MCF 10A (cell line): ENCODE measurements at regions of chr22 and their contacts with region 1.

Region 1: GRCh38 chr22:40950962-40951794 is at the start of gene RBX1:
- DNase-seq: peak; percentile 98
- H3K4me3 Mint-ChIP-seq: peak within 1 kb of the TSS; percentile 98
- H3K27ac Mint-ChIP-seq: peak within 1 kb of the TSS; percentile 99
- H3K4me1 Mint-ChIP-seq: peaks cover 8% of the 10 kb centered on the region
- H3K27me3 Mint-ChIP-seq: no peaks in the 10 kb centered on the region
- CTCF ChIP-seq: no peak
- total RNA-seq, gene RBX1: 46.7 and 71.3 TPM in 2 replicates

Region 2: DNA sequence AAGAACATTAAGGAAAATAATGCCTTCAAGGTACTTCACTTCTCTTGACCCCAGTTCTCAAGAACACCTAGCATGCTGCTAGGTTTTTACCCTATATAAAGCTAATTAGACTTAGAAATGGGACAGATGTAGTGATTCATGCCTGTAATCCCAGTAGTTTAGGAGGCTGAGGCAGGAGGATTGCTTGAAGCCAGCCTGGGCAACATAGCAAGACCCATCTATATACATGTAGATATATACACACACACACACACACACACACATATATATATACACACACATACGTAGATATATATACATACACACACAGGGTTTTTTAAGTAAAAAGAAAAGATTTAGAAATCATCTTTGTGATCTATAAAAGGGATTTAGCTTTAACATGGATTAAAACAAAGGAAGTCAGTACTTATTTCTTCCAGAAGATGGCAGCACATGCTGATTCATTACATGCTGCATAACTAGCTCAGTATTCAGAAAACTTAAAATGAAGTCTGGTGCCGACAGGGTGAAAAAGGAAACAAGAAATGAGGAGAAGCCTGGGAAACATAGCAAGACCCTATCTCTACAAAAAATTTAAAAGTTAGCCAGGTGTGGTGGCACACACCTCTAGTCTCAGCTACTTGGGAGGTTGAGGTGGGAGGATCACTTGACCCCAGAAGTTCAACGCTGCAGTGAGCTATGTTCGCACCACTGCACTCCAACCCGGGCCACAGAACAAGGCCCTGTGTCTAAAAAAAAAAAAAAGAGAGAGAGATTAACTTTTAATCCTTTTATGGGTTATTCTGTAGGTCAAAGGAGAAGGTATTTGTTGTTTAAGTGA is 28.5 kb before region 1 on chr22:
- CTCF ChIA-PET with region 1: interaction called, 10 read pairs
- POLR2A ChIA-PET with region 1: interaction called, 14 read pairs
- intact Hi-C with region 1: no loop called
- DNase-seq: peak; percentile 66
- H3K4me3 Mint-ChIP-seq: no peak overlapping the region
- H3K27ac Mint-ChIP-seq: no peak overlapping the region
- H3K4me1 Mint-ChIP-seq: peaks cover 5% of the 10 kb centered on the region
- H3K27me3 Mint-ChIP-seq: no peaks in the 10 kb centered on the region
- CTCF ChIP-seq: peak; percentile 64

Region 3: GRCh38 chr22:40965936-40966725 is 15.0 kb after region 1 on chr22:
- CTCF ChIA-PET with region 1: no interaction called
- POLR2A ChIA-PET with region 1: interaction called, 21 read pairs
- intact Hi-C with region 1: no loop called
- DNase-seq: no peak
- H3K4me3 Mint-ChIP-seq: no peak overlapping the region
- H3K27ac Mint-ChIP-seq: no peak overlapping the region
- H3K4me1 Mint-ChIP-seq: no peaks in the 10 kb centered on the region
- H3K27me3 Mint-ChIP-seq: no peaks in the 10 kb centered on the region
- CTCF ChIP-seq: no peak

Region 4: GRCh38 chr22:41022470-41023298 is 71.5 kb after region 1 on chr22:
- CTCF ChIA-PET with region 1: no interaction called
- POLR2A ChIA-PET with region 1: interaction called, 102 read pairs
- intact Hi-C with region 1: loop called (anchors 1 kb)
- DNase-seq: peak; percentile 86
- H3K4me3 Mint-ChIP-seq: peak overlapping the region; percentile 88
- H3K27ac Mint-ChIP-seq: peak overlapping the region; percentile 97
- H3K4me1 Mint-ChIP-seq: peaks cover 6% of the 10 kb centered on the region
- H3K27me3 Mint-ChIP-seq: no peaks in the 10 kb centered on the region
- CTCF ChIP-seq: no peak

Region 5: DNA sequence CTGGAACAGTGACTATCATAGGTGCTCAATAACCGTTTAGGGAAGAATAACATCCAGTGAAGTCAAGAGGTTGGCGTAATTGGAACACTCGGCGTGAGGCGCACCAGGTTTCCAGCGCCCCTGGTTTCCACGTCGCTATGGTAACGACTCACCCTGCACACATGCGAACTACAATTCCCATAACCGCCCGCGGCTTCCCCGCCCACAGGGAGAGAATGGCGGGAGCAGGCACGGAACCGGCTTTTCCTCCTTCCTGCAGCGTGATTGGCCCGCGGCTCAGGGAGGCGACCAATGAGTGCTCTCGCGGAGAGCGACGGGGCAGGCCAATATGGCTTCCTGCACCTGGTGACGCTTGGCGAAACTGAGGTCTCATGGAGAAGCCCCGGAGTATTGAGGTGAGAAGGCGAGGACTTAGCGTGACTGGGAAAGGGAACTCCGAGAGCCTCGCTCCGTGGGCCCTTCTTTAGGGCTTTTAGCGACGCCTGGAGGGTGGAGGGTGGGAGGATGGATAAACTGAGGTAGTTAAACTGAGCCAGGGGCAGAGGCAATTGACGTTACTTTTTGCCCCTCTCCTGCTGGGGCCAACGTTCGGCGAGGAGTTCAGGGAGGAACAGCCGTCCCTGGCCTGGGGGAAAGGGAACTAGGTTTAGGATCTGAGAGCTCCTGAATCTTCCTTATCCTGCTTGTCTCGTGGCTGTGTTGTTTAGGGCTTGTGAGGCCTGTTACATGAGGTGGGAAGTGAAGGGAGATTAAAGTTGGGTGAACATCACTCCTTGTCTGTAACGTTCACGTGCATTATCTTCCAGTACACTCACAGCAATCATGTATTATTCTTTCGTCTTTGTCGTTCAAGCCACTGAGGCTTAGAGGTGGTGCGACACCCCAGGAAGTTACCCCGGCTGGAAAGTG is 254.1 kb after region 1 on chr22 and contains the start of gene L3MBTL2:
- CTCF ChIA-PET with region 1: interaction called, 4 read pairs
- POLR2A ChIA-PET with region 1: no interaction called
- intact Hi-C with region 1: loop called (anchors 10 kb)
- DNase-seq: peak; percentile 97
- H3K4me3 Mint-ChIP-seq: peak within 1 kb of the TSS; percentile 96
- H3K27ac Mint-ChIP-seq: peak within 1 kb of the TSS; percentile 98
- H3K4me1 Mint-ChIP-seq: no peaks in the 10 kb centered on the region
- H3K27me3 Mint-ChIP-seq: no peaks in the 10 kb centered on the region
- CTCF ChIP-seq: no peak
- total RNA-seq, gene L3MBTL2: 28.7 and 30.0 TPM in 2 replicates